WTC11 (cell line): ENCODE measurements at regions of chr17 and their contacts with region 1.

Region 1: DNA sequence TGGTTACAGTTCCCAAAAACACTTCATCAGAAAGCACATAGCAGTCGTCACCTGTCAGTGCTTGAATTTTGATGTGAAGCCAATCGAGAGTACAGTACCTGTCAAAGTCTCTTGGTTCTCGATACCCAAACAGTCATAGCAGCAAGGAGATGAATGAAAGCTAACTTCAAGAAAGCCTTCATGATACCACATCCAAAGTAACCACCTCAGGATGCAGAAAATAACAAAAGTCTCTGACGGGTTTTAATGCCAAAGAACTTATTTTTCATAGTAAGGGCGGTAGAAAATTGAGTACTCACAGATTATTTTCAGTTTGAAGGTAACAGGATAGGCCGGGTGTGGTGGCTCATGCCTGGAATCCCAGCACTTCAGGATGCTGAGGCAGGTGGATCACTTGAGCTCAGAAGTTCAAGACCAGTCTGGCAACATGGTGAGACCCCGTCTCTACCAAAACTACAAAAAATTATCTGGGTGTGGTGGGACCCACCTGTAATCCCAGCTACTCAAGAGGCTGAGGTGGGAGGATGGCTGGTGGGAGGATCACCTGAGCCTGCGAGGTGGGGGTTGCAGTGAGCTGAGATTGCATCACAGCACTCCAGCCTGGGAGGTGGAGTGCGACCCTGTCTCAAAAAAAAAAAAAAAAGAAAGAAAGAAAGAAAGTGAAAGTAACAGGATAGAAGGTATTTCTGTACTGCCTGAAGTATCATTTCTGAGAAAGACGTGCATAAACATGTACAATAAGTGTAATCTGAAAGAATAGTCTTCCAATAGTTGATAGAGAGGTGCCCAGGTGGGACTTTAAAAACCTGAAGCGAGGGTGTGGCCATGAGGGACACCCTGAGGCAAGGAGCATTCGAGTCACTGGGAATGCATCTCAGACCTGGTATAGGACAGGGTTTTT is 15.4 kb downstream of the MFSD11 start:
- DNase-seq: no peak
- ATAC-seq: no peak
- H3K4me3 Mint-ChIP-seq: no peak overlapping the region
- H3K27ac Mint-ChIP-seq: no peak overlapping the region
- H3K4me1 Mint-ChIP-seq: no peaks in the 10 kb centered on the region
- H3K27me3 Mint-ChIP-seq: no peaks in the 10 kb centered on the region
- CTCF ChIP-seq: no peak

Region 2: GRCh38 chr17:76994237-76994637 is 240.9 kb after region 1 on chr17:
- CTCF ChIA-PET with region 1: no interaction called
- POLR2A ChIA-PET with region 1: interaction called, 11 read pairs
- DNase-seq: no peak
- ATAC-seq: no peak
- H3K4me3 Mint-ChIP-seq: no peak overlapping the region
- H3K27ac Mint-ChIP-seq: 0 out of 2 replicates have a peak overlapping the region, but pooled peaks have one; percentile 23
- H3K4me1 Mint-ChIP-seq: peaks cover 48% of the 10 kb centered on the region
- H3K27me3 Mint-ChIP-seq: no peaks in the 10 kb centered on the region
- CTCF ChIP-seq: no peak